ENCODE measurements at regions of chr6 and their contacts with region 1.

Region 1: GRCh38 chr6:110873981-110874879 is at the start of gene AMD1:
- DNase-seq: peak; percentile 99
- total RNA-seq, gene AMD1: 46.0 TPM

Region 2: GRCh38 chr6:110543106-110543505 is 331.1 kb before region 1 on chr6:
- intact Hi-C with region 1: loop called (anchors 5 kb)
- DNase-seq: no peak

Region 3: GRCh38 chr6:110682460-110682853 is 191.8 kb before region 1 on chr6:
- intact Hi-C with region 1: loop called (anchors 2 kb)
- DNase-seq: no peak

Region 4: GRCh38 chr6:110795271-110795670 is 79.0 kb before region 1 on chr6:
- intact Hi-C with region 1: no loop called
- DNase-seq: no peak

Region 5: GRCh38 chr6:110815217-110816109 is 58.8 kb before region 1 on chr6 and contains the start of gene CDK19:
- intact Hi-C with region 1: loop called (anchors 1 kb)
- DNase-seq: peak; percentile 100
- total RNA-seq, gene CDK19: 8.3 TPM

Region 6: GRCh38 chr6:110958329-110959192 is 84.3 kb after region 1 on chr6 and contains the start of gene GTF3C6:
- intact Hi-C with region 1: loop called (anchors 5 kb)
- DNase-seq: peak; percentile 97
- total RNA-seq, gene GTF3C6: 96.6 TPM

Region 7: DNA sequence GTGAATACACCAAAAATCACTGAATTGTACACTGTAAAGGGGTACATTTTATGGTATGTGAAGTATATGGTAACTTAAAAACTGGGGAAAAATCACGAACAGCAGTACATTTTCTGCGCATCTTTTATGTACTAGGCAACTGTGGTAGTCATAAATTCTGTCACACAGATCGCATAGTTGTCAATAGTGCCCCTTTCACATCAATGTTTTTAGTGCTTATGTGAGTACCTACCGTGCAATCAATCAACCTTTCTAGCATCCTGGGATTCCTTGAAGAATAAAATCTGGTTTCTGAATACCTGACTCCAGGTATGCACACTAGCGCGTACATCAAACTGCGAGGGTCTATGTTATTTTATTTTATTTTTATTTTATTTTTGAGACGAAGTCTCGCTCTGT is 107.0 kb after region 1 on chr6:
- intact Hi-C with region 1: loop called (anchors 10 kb)
- DNase-seq: no peak

Region 8: DNA sequence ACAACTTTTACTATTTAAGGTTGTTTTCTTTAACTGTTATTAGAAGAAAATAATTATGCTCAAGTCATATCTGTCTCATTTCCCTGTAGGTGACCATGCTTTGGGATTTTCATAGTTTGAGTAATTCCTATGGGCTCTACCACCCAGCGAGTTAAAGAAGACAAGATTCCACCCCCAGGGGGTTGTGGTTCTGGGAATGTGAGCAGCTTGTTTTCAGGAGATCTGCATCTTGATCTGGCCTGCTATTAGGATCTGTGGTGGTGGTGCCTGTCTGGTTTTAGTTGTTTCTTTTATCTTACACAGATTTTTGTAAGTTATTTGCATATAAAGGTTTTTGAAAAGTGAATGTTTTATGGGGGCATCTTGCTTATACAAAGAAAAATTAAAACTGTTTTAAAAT is 629.0 kb after region 1 on chr6:
- intact Hi-C with region 1: no loop called
- DNase-seq: no peak